ENCODE measurements at regions of chr14 and their contacts with region 1.

Region 1: DNA sequence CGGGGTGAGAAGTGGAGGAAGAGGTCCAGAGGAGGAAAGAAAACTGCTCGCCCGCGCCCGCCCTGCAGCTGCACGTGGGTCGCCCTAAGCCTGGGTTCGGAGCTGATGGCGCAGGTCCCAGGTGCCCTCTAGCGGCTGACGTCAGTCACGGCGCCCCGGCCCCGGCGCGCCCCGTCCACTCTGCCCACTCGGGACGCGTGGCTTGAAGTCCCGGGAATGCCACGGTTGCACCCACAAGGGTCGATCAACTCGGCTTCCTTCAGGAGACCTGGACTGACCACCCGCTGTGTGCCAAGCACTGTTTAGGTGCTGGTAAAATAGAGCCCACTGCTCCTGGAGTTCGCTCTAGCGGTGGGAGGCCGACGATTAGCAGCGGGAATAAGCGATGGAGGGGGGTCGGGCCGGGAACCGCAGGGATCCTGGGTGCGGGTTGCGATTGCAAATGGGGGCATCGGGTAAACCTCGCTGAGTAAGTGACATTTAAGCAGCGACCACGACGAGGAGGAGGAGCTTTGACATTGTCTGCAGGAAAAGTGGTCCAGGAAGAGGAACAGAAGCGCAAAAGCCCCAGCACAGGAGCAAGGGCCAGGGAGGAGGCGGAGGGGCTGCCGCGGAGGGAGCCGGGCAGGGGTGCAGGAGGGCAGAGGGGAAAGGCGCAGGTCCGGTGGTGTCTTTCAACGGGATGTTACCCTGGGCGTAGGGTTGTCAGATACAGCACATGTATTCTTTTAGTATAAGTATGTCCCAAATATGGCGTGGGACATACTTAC is 5.1 kb upstream of the ZNF839 start:
- H3K4me3 ChIP-seq: peak overlapping the region; percentile 64
- H3K27ac ChIP-seq: no peak overlapping the region; the same call in 1 of the 2 replicates
- H3K4me1 ChIP-seq: peaks cover 13% of the 10 kb centered on the region
- CTCF ChIP-seq: peak; percentile 99

Region 2: GRCh38 chr14:102215071-102215470 is 99.4 kb before region 1 on chr14:
- CTCF ChIA-PET with region 1: interaction called, 14 read pairs
- POLR2A ChIA-PET with region 1: no interaction called
- H3K4me3 ChIP-seq: no peak overlapping the region
- H3K27ac ChIP-seq: no peak overlapping the region
- H3K4me1 ChIP-seq: no peaks in the 10 kb centered on the region
- CTCF ChIP-seq: no peak

Region 3: DNA sequence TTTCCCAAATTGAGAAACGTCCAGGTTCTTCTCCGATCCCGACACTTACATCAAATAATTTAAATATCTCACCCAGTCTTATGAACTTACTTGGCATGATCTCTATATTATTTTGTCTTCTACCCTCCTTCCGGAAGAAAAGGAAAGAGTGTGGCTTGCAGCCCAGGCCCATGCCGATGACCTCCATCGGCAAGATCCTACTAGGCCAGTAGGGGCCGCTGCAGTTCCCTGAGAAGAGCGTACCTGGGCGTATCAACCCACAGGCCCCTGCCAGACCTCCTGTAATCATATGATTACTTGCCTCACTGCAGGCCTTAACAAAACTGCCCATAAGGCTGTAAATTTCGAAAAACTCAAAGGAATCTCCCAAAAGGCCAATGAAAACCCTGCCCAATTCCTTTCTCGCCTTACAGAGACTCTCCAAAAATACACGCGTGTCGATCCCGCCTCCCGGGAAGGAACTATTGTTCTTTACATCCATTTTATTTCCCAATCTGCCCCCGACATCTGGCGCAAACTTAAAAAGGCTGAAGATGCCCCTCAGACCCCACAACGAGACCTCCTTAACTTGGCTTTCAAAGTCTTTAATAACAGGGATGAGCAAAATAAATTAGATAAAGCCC is 79.0 kb before region 1 on chr14:
- CTCF ChIA-PET with region 1: interaction called, 18 read pairs
- POLR2A ChIA-PET with region 1: interaction called, 5 read pairs
- H3K4me3 ChIP-seq: no peak overlapping the region
- H3K27ac ChIP-seq: no peak overlapping the region
- H3K4me1 ChIP-seq: no peaks in the 10 kb centered on the region
- CTCF ChIP-seq: peak; percentile 47; the same call in 1 of the 2 replicates

Region 4: DNA sequence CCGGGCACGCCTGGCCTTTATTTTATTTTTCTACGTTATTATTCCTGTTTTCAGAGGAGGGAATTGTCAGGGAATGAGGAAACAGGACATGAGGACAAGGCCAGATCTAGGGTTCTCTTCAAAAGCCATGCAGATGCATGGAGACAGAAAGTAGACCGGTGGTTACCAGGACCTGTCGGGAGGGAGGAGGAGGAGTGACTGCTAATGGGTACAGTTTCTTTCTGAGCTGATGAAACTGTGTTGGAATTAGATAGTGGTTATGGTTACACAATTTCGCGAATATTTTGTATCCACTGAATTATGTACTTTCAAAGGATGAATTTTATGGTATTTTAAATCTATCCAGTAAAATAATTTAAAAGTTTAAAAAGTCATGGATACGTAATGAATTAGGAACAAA is 16.4 kb after region 1 on chr14:
- CTCF ChIA-PET with region 1: no interaction called
- POLR2A ChIA-PET with region 1: no interaction called
- H3K4me3 ChIP-seq: no peak overlapping the region
- H3K27ac ChIP-seq: no peak overlapping the region
- H3K4me1 ChIP-seq: no peaks in the 10 kb centered on the region
- CTCF ChIP-seq: no peak